K562 (cell line): ENCODE measurements at regions of chr6 and their contacts with region 1.

Region 1: DNA sequence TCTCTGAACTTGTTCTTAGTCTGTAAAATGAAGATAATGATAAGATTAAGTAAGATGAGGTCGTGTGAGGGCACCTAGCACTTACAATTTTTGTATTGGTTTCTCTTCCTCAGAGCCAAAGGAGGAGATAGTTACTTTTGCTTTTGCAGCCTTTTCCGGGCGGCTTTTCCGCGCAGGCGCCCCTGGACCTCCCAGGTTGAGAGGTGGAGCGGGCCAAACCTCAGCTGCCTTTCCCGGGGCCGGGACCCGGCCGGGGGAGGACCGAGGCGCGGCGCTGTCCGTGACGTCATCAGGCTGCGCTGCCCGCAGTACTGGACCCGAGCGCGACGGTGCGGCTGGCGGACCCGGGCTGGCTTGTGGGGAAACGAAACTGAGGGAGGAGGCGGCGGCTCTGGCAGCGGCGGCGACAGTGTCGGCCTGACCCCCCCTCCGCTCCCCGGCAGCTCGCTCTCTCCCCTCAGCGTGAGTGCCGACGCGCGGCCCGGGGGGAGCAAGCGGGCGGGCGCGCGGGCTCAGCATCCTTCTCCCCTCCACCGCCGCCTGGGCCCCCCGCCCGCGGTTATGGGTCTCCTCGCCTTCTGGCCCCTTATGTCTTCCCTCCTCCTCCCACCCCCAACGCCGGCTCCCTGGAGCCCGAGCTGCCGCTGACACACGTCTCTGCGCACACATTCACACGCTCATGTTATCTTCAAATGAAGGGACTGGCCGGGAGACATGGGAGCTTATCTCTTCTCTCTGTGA is at the start of gene CMTR1:
- DNase-seq: peak; percentile 97 to 99 (median 99)
- ATAC-seq: peak; percentile 95
- H3K4me3 ChIP-seq: peak within 1 kb of the TSS; percentile 88
- H3K27ac ChIP-seq: peak within 1 kb of the TSS; percentile 83
- H3K4me1 ChIP-seq: peaks cover 14 to 22% of the 10 kb centered on the region in 2 experiments
- H3K27me3 ChIP-seq: no peaks in the 10 kb centered on the region
- CTCF ChIP-seq: peak in 1 of 3 experiments; percentile 3; a peak in 2 of 6 replicates
- EP300 ChIP-seq: peak; percentile 36; the same call in 1 of the 2 replicates
- POLR2A ChIP-seq: peak; percentile 85
- RAD21 ChIP-seq: peak in 1 of 2 experiments; percentile 22; a peak in 2 of 4 replicates
- polyA plus RNA-seq, gene CMTR1: 2.9 to 5.5 TPM

Region 2: GRCh38 chr6:37393381-37393929 is 39.6 kb before region 1 on chr6:
- CTCF ChIA-PET with region 1: no interaction called
- POLR2A ChIA-PET with region 1: interaction called, 11 read pairs
- in situ Hi-C with region 1: no loop called
- intact Hi-C with region 1: no loop called
- DNase-seq: peak in 1 of 4 experiments; percentile 5
- ATAC-seq: no peak
- H3K4me3 ChIP-seq: no peak overlapping the region
- H3K27ac ChIP-seq: no peak overlapping the region
- H3K4me1 ChIP-seq: peaks cover 3 to 7% of the 10 kb centered on the region in 2 experiments; a peak in 3 of 5 replicates
- H3K27me3 ChIP-seq: no peaks in the 10 kb centered on the region
- CTCF ChIP-seq: no peak
- EP300 ChIP-seq: no peak
- POLR2A ChIP-seq: no peak
- RAD21 ChIP-seq: no peak